Activated T-helper 1 cell treated with anti-CD3 and anti-CD28 coated beads, Interleukin-12 subunit alpha, Interleukin-12 subunit beta, Interleukin-2, Interleukin-4 antibody, amounts not matched to agents 30 ng/mL and 10 ng/mL and 1 ng/mL, durations not matched to agents 14 hours and 24 hours and 36 hours (primary cell): ENCODE measurements at regions of chr12 and their contacts with region 1.

Region 1: DNA sequence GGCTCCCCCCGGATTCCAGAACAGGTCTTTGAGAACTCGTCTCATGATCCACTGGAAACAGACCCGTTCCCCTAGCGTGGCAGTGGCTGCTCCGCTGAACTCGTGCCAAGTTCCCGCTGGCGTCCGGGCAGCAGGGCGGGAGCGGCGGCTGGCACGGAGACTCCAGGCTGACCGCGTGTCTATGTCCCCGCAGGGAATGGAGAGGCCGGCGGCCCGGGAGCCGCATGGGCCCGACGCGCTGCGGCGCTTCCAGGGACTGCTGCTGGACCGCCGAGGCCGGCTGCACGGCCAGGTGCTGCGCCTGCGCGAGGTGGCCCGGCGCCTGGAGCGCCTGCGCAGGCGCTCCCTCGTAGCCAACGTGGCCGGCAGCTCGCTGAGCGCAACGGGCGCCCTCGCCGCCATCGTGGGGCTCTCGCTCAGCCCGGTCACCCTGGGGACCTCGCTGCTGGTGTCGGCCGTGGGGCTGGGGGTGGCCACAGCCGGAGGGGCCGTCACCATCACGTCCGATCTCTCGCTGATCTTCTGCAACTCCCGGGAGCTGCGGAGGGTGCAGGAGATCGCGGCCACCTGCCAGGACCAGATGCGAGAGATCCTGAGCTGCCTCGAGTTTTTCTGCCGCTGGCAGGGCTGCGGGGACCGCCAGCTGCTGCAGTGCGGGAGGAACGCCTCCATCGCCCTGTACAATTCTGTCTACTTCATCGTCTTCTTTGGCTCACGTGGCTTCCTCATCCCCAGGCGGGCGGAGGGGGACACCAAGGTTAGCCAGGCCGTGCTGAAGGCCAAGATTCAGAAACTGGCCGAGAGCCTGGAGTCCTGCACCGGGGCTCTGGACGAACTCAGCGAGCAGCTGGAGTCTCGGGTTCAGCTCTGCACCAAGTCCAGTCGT is 1.5 kb downstream of the APOLD1 start:
- DNase-seq: peak; percentile 70
- H3K4me3 Mint-ChIP-seq: peak overlapping the region; percentile 89
- H3K27ac Mint-ChIP-seq: peak overlapping the region; percentile 88
- H3K4me1 Mint-ChIP-seq: peaks cover 42% of the 10 kb centered on the region
- H3K27me3 Mint-ChIP-seq: no peaks in the 10 kb centered on the region

Region 2: GRCh38 chr12:12776261-12776660 is 10.7 kb before region 1 on chr12:
- intact Hi-C with region 1: no loop called
- DNase-seq: no peak
- H3K4me3 Mint-ChIP-seq: no peak overlapping the region
- H3K27ac Mint-ChIP-seq: no peak overlapping the region
- H3K4me1 Mint-ChIP-seq: no peaks in the 10 kb centered on the region
- H3K27me3 Mint-ChIP-seq: peaks cover 6% of the 10 kb centered on the region

Region 3: DNA sequence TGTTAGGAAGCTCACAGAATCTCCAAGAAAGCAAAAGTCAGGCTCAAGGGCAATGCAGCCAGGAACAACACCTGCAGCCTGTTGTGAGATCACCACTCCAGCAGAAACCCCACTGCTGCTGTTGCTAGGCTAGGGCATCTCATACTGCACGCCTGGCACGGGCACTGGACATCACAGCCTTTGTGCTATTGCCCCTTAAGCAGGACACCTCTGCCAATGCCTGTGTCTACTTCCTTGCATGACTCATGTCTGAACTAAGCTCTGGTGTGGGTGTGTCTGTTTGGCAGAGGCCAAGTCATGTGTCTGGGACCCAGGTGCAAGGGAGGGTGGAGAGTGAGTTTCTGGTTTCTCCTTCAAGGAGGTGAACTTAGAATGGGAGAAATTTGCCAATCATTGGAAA is 16.2 kb after region 1 on chr12:
- intact Hi-C with region 1: loop called (anchors 1 kb)
- DNase-seq: peak; percentile 48
- H3K4me3 Mint-ChIP-seq: peak overlapping the region; percentile 49
- H3K27ac Mint-ChIP-seq: peak overlapping the region; percentile 84
- H3K4me1 Mint-ChIP-seq: peaks cover 58% of the 10 kb centered on the region
- H3K27me3 Mint-ChIP-seq: no peaks in the 10 kb centered on the region

Region 4: GRCh38 chr12:12837025-12837872 is 50.3 kb after region 1 on chr12:
- intact Hi-C with region 1: loop called (anchors 2 kb)
- DNase-seq: no peak
- H3K4me3 Mint-ChIP-seq: no peak overlapping the region
- H3K27ac Mint-ChIP-seq: peak overlapping the region; percentile 54
- H3K4me1 Mint-ChIP-seq: peaks cover 24% of the 10 kb centered on the region
- H3K27me3 Mint-ChIP-seq: no peaks in the 10 kb centered on the region

Region 5: DNA sequence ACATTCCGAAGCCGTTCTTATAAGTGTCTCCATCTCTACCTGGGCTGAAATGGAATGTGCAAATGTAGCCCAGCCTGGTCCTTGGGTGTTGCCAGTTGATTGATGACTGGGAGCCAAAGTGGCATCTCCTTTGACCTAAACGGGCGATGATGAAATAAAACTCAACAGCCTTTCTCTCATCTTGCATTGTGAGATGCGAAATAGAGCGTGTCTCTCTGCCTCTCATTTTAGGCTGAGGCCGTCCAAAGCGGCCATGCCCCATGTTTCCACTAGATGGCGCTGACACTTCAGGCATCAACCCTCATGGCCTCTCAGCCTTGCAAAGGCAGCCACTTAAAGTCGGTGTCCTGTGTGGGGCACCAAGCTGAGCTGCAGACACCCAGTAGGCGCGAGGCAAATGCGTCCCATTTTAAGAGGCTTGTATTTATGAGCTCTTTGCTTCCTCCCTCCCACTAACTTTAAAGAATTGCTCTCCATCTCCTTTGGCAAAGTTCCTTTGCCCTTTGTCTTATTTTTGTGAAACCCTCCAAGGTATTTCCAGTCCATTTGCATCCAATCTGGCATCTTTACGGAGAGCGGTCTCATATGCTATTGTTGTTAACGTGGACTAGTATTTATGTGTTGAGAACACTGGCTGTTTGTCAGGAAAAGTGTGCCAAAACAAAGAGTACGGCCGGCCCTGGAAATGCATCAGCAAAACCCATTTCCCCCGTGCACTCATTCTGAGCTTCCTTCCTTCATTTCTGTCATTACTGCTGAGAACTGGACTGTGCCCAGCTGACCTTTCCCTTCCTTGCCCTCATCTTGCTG is 129.4 kb after region 1 on chr12:
- intact Hi-C with region 1: loop called (anchors 1 kb)
- DNase-seq: peak; percentile 76
- H3K4me3 Mint-ChIP-seq: no peak overlapping the region
- H3K27ac Mint-ChIP-seq: no peak overlapping the region
- H3K4me1 Mint-ChIP-seq: peaks cover 11% of the 10 kb centered on the region
- H3K27me3 Mint-ChIP-seq: peaks cover 14% of the 10 kb centered on the region

Region 6: DNA sequence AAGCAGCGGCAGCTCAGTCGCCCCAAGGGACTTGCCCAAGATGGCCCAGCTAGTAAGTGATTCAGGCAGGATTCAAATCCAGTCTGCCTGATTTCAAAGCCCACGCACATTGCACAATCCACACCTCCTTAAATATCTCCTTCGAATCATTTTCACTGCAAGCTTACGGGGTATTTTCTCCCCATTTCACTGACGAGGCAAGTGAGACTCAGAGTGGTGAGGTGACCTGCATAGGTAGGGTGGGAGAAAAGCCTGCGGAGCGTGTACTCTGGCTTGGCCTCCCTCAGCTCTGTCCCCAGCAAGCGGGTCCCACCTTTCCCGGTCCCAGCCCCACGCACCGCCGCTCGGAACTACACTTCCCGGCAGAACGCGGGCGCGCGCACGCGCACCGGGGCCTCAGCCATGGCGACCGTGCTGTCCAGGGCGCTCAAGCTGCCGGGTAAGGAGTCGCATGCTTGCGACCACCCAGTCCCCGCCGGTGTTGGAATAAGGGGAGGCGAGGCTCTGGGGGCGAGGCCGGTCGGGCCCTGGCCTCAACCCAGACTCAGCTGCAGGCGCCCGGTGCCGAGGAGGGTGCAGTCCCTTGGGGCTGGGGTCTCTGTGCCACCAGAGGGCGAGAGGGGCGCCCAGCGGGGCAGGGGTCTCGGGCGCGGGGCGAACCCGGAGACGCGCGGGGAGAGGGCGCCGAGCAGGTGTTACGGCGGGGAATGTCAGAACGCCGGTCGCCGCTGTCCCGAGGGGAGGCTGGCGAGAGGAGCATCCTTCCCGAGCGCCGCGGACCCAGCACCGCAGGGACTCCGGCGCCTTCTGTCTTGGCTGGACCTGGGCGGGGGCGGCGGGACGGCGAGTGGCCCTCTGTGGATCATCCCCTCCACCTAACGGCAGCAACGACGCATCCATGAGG is 257.3 kb after region 1 on chr12 and contains the start of gene FAM234B:
- intact Hi-C with region 1: loop called (anchors 5 kb)
- DNase-seq: peak; percentile 62
- H3K4me3 Mint-ChIP-seq: peak within 1 kb of the TSS; percentile 83
- H3K27ac Mint-ChIP-seq: peak within 1 kb of the TSS; percentile 66
- H3K4me1 Mint-ChIP-seq: peaks cover 4% of the 10 kb centered on the region
- H3K27me3 Mint-ChIP-seq: peaks cover 19% of the 10 kb centered on the region
- total RNA-seq, gene FAM234B: 6.0 and 6.6 TPM in 2 replicates

Region 7: DNA sequence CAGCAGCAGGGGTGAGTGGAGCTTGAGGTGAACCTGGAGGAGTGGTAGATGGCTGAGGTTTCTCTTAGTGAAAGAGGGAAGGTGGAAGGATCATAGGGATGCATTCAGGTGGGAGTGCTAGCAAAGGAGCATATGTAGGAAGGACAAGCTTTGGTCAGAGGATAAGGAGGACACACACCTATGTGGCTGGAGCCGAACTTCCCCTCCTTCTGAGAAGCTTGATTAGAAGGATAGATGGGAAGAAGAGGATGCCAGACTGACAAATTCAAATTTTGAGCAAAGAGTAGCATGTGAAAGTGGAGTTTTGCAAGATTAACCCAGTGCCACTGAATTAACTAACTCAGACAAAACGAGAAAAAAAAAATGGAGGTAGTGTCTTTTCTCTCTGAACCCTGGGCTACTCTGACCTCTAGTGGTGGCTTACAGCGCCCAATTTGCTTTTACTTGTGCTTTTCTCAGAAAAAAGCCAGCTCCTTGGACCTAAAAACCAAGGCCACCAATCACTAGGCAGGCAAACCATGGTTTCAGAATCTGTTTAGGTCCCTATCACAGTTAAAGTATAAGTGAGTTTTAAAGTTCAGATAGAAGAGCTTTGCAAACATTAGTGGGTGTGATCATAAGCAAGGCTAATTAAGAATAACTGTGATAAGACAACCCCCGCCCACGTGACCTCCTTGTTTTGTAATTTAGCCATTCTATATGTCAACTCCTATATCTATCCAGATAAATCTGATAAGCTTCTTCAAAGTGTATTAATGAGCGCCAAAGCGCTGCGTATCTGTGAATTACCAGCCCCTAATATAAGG is 425.1 kb after region 1 on chr12:
- intact Hi-C with region 1: loop called (anchors 2 kb)
- DNase-seq: peak; percentile 62
- H3K4me3 Mint-ChIP-seq: no peak overlapping the region
- H3K27ac Mint-ChIP-seq: peak overlapping the region; percentile 41
- H3K4me1 Mint-ChIP-seq: peaks cover 53% of the 10 kb centered on the region
- H3K27me3 Mint-ChIP-seq: no peaks in the 10 kb centered on the region